MCF 10A (cell line): ENCODE measurements at regions of chr1 and their contacts with region 1.

Region 1: GRCh38 chr1:150696590-150697524 is at the start of gene GOLPH3L:
- DNase-seq: peak; percentile 100
- H3K4me3 Mint-ChIP-seq: peak within 1 kb of the TSS; percentile 88
- H3K27ac Mint-ChIP-seq: peak within 1 kb of the TSS; percentile 95
- H3K4me1 Mint-ChIP-seq: peaks cover 25% of the 10 kb centered on the region
- H3K27me3 Mint-ChIP-seq: no peaks in the 10 kb centered on the region
- CTCF ChIP-seq: no peak
- total RNA-seq, gene GOLPH3L: 68.5 and 76.9 TPM in 2 replicates

Region 2: DNA sequence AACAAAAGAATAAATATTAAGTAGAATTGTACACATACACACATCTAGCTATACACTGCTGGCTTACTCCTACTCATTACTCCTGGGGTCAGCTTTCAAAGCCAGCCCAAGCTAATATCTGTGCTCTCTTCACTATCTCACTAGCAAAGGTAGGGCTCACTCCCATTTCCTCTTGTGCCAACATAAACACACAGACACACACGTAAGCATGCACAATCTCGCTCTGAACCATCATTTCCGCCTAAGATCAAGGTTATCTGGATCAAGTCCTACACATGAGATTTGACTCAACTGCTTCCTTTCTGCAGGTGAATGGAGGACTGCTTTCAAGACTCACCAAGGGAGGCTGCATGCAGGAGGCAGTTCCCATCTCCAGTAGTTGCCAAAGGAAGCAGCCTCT is 731.4 kb before region 1 on chr1:
- CTCF ChIA-PET with region 1: no interaction called
- POLR2A ChIA-PET with region 1: no interaction called
- intact Hi-C with region 1: no loop called
- DNase-seq: no peak
- H3K4me3 Mint-ChIP-seq: no peak overlapping the region
- H3K27ac Mint-ChIP-seq: peak overlapping the region; percentile 2
- H3K4me1 Mint-ChIP-seq: peaks cover 22% of the 10 kb centered on the region
- H3K27me3 Mint-ChIP-seq: no peaks in the 10 kb centered on the region
- CTCF ChIP-seq: no peak

Region 3: DNA sequence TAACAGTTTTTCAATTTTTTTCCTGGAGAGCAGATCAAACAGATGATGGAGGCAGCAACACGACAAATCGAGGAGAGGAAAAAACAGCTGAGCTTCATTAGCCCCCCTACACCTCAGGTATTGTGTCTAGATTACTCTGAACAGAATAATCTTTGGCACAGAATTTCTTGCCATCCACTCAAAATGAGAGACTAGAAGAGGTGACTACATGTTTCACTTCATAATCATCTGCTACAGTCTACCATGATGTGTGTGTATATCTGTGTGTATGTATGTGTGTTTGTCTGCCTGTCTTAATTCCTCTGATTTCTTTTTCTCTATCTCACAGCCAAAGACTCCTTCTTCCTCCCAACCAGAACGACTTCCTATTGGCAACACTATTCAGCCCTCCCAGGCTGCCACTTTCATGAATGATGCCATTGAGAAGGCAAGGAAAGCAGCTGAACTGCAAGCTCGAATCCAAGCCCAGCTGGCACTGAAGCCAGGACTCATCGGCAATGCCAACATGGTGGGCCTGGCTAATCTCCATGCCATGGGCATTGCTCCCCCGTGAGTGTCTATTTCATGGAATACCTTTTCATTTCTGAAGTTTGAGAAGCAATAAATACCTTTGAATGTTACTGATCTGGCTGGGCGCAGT is 364.1 kb before region 1 on chr1:
- CTCF ChIA-PET with region 1: no interaction called
- POLR2A ChIA-PET with region 1: no interaction called
- intact Hi-C with region 1: no loop called
- DNase-seq: no peak
- H3K4me3 Mint-ChIP-seq: no peak overlapping the region
- H3K27ac Mint-ChIP-seq: no peak overlapping the region
- H3K4me1 Mint-ChIP-seq: no peaks in the 10 kb centered on the region
- H3K27me3 Mint-ChIP-seq: no peaks in the 10 kb centered on the region
- CTCF ChIP-seq: no peak

Region 4: GRCh38 chr1:150537732-150538684 is 158.8 kb before region 1 on chr1:
- CTCF ChIA-PET with region 1: no interaction called
- POLR2A ChIA-PET with region 1: no interaction called
- intact Hi-C with region 1: no loop called
- DNase-seq: no peak
- H3K4me3 Mint-ChIP-seq: no peak overlapping the region
- H3K27ac Mint-ChIP-seq: no peak overlapping the region
- H3K4me1 Mint-ChIP-seq: peaks cover 6% of the 10 kb centered on the region
- H3K27me3 Mint-ChIP-seq: no peaks in the 10 kb centered on the region
- CTCF ChIP-seq: no peak

Region 5: GRCh38 chr1:150567717-150568593 is 128.9 kb before region 1 on chr1:
- CTCF ChIA-PET with region 1: interaction called, 4 read pairs
- POLR2A ChIA-PET with region 1: interaction called, 13 read pairs
- intact Hi-C with region 1: no loop called
- DNase-seq: peak; percentile 100
- H3K4me3 Mint-ChIP-seq: peak overlapping the region; percentile 52
- H3K27ac Mint-ChIP-seq: peak overlapping the region; percentile 99
- H3K4me1 Mint-ChIP-seq: peaks cover 64% of the 10 kb centered on the region
- H3K27me3 Mint-ChIP-seq: no peaks in the 10 kb centered on the region
- CTCF ChIP-seq: peak; percentile 6

Region 6: DNA sequence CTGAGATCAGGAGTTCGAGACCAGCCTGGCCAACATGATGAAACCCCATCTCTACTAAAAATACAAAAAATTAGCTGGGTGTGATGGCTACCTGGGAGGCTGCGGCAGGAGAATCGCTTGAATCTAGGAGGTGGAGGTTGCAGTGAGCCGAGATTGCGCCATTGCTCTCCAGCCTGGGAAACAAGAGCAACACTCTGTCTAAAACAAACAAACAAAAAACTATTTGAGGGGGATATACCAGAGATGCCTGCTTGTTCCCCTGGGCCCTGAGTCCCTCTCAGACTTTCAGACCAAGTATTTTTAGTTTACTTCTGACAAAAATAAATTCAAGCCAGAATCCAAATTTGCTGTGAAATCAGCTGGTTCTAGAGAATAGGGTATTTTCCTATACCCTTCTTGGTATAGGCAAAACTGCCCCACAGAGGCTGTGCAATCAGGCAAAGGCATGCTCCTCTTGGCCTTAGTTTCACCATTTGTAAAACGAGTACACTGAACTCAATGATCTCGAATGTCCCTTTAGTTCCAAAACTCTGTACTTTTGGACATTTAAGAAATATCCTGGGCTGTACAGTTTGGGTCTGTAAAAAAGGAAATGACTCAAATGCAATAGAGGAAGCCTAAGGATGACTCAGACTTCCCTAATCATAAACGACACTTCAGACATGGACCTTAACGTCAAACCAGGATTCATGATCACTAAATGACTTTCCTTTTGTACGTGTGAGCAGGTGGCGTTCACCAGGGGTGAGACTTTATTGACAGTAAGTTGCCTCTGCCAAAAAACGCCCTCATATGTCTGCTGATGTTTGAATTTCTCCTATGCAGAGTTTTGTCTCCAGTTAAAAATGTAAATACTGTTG is 83.6 kb before region 1 on chr1:
- CTCF ChIA-PET with region 1: no interaction called
- POLR2A ChIA-PET with region 1: interaction called, 10 read pairs
- intact Hi-C with region 1: no loop called
- DNase-seq: peak; percentile 98
- H3K4me3 Mint-ChIP-seq: peak overlapping the region; percentile 55
- H3K27ac Mint-ChIP-seq: peak overlapping the region; percentile 84
- H3K4me1 Mint-ChIP-seq: peaks cover 55% of the 10 kb centered on the region
- H3K27me3 Mint-ChIP-seq: no peaks in the 10 kb centered on the region
- CTCF ChIP-seq: no peak

Region 7: GRCh38 chr1:150678988-150679387 is 17.9 kb before region 1 on chr1:
- CTCF ChIA-PET with region 1: interaction called, 4 read pairs
- POLR2A ChIA-PET with region 1: interaction called, 10 read pairs
- intact Hi-C with region 1: no loop called
- DNase-seq: no peak
- H3K4me3 Mint-ChIP-seq: no peak overlapping the region
- H3K27ac Mint-ChIP-seq: no peak overlapping the region
- H3K4me1 Mint-ChIP-seq: no peaks in the 10 kb centered on the region
- H3K27me3 Mint-ChIP-seq: no peaks in the 10 kb centered on the region
- CTCF ChIP-seq: no peak

Region 8: GRCh38 chr1:150711987-150712386 is 15.1 kb after region 1 on chr1:
- CTCF ChIA-PET with region 1: no interaction called
- POLR2A ChIA-PET with region 1: interaction called, 13 read pairs
- intact Hi-C with region 1: no loop called
- DNase-seq: no peak
- H3K4me3 Mint-ChIP-seq: no peak overlapping the region
- H3K27ac Mint-ChIP-seq: no peak overlapping the region
- H3K4me1 Mint-ChIP-seq: no peaks in the 10 kb centered on the region
- H3K27me3 Mint-ChIP-seq: no peaks in the 10 kb centered on the region
- CTCF ChIP-seq: no peak

Region 9: GRCh38 chr1:151156515-151156819 is 459.6 kb after region 1 on chr1 and contains the start of gene TNFAIP8L2:
- CTCF ChIA-PET with region 1: no interaction called
- POLR2A ChIA-PET with region 1: no interaction called
- intact Hi-C with region 1: loop called (anchors 5 kb)
- DNase-seq: no peak
- H3K4me3 Mint-ChIP-seq: no peak within 1 kb of the TSS
- H3K27ac Mint-ChIP-seq: no peak within 1 kb of the TSS
- H3K4me1 Mint-ChIP-seq: peaks cover 12% of the 10 kb centered on the region
- H3K27me3 Mint-ChIP-seq: no peaks in the 10 kb centered on the region
- CTCF ChIP-seq: no peak
- total RNA-seq, gene TNFAIP8L2: not detected in 2 replicates